Panc1 (cell line): ENCODE measurements at regions of chr1 and their contacts with region 1.

Region 1: GRCh38 chr1:201254625-201255506 is 28.4 kb upstream of the PKP1 start:
- DNase-seq: no peak
- ATAC-seq: peak; percentile 83
- H3K4me3 ChIP-seq: no peak overlapping the region
- H3K27ac ChIP-seq: no peak overlapping the region
- H3K4me1 ChIP-seq: no peaks in the 10 kb centered on the region
- H3K27me3 ChIP-seq: no peaks in the 10 kb centered on the region; the same call in 1 of the 2 replicates
- CTCF ChIP-seq: peak; percentile 98

Region 2: DNA sequence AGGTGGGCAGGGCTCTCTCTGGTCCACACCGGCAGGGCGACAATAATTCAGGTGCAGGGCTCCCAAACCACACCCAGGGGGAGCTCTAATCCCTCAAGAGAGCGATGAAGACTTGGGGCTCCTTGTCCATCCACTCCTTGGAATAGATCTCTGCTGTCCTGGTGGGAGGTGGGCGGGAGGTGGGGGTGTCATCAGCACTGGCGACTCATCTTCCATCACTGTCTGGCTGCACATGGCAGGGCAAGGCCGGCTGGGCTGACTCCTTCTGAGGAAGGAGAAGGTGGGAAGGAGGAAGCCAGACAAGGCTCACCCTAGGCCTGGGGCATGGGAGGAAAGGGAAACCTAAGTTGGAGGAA is 93.3 kb after region 1 on chr1:
- CTCF ChIA-PET with region 1: interaction called, 4 read pairs
- POLR2A ChIA-PET with region 1: no interaction called
- in situ Hi-C with region 1: no loop called
- intact Hi-C with region 1: loop called (anchors 5 kb)
- DNase-seq: no peak
- ATAC-seq: peak; percentile 88
- H3K4me3 ChIP-seq: no peak overlapping the region
- H3K27ac ChIP-seq: no peak overlapping the region
- H3K4me1 ChIP-seq: no peaks in the 10 kb centered on the region
- H3K27me3 ChIP-seq: peaks cover 2% of the 10 kb centered on the region
- CTCF ChIP-seq: peak; percentile 83

Region 3: GRCh38 chr1:201361652-201362504 is 107.0 kb after region 1 on chr1:
- CTCF ChIA-PET with region 1: interaction called, 3 read pairs
- POLR2A ChIA-PET with region 1: no interaction called
- in situ Hi-C with region 1: no loop called
- intact Hi-C with region 1: loop called (anchors 2 kb)
- DNase-seq: no peak
- ATAC-seq: peak; percentile 82
- H3K4me3 ChIP-seq: no peak overlapping the region
- H3K27ac ChIP-seq: no peak overlapping the region
- H3K4me1 ChIP-seq: no peaks in the 10 kb centered on the region
- H3K27me3 ChIP-seq: no peaks in the 10 kb centered on the region; the same call in 1 of the 2 replicates
- CTCF ChIP-seq: peak; percentile 90